CD8-positive, alpha-beta memory T cell (primary cell): ENCODE measurements at regions of chr12 and their contacts with region 1.

Region 1: DNA sequence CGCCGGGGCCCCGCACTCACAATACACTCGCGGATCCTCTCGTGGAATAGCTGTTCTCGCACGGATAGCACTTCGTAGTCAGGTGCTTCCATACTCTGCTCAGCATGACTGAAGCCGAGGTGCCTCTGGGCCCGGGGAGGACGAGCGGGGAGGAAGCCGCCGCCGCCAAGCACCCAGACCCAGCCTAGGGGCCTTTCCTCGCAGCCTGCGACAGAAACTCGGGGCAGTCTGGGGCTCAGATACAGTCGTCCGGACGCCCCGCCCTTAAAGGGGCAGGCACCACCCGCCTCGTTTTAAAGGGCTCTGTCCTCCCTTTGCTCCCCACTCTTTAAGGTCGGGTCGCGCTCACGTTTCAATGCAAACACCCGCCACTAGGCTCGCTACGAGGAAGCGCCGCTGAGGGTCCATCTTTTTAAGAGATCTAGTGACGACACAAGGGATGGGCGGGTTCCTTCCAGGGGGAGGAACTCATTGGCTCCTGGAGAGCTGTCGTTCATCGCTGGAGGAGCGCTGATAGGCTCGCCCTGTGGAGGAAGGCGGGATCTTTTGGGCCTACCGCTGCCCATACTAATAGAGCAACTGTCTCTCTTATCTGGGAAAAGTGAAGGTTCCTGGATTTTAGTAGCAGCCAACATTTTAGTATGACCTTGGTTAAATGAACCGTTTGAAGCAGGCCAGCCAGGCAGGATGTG is at the start of gene LMBR1L:
- DNase-seq: peak; percentile 92 to 98 (median 96)
- H3K4me3 ChIP-seq: peak within 1 kb of the TSS; percentile 93
- H3K4me3 Mint-ChIP-seq: peak within 1 kb of the TSS; percentile 97 to 99 (median 99)
- H3K27ac ChIP-seq: peak within 1 kb of the TSS; percentile 87
- H3K27ac Mint-ChIP-seq: peak within 1 kb of the TSS; percentile 86 to 98 (median 98)
- H3K4me1 ChIP-seq: peaks cover 21% of the 10 kb centered on the region
- H3K4me1 Mint-ChIP-seq: peaks cover 36 to 44% (median 43%) of the 10 kb centered on the region in 3 donors
- H3K27me3 ChIP-seq: no peaks in the 10 kb centered on the region
- H3K27me3 Mint-ChIP-seq: no peaks in the 10 kb centered on the region
- total RNA-seq, gene LMBR1L: 47.2 to 48.7 TPM

Region 2: GRCh38 chr12:49098035-49098451 is 12.6 kb before region 1 on chr12:
- CTCF ChIA-PET with region 1: interaction called, 32 read pairs
- POLR2A ChIA-PET with region 1: interaction called, 4 read pairs
- DNase-seq: peak; percentile 43 to 75 (median 50)
- H3K4me3 ChIP-seq: no peak overlapping the region
- H3K4me3 Mint-ChIP-seq: no peak overlapping the region
- H3K27ac ChIP-seq: no peak overlapping the region
- H3K27ac Mint-ChIP-seq: peak overlapping the region in 2 of 8 donors; percentile 27 to 52
- H3K4me1 ChIP-seq: peaks cover 13% of the 10 kb centered on the region
- H3K4me1 Mint-ChIP-seq: peaks cover 15 to 19% (median 16%) of the 10 kb centered on the region in 3 donors
- H3K27me3 ChIP-seq: peaks cover 18% of the 10 kb centered on the region
- H3K27me3 Mint-ChIP-seq: peaks cover 20 to 21% of the 10 kb centered on the region in 2 donors